H1 (cell line): ENCODE measurements at regions of chr12 and their contacts with region 1.

Region 1: DNA sequence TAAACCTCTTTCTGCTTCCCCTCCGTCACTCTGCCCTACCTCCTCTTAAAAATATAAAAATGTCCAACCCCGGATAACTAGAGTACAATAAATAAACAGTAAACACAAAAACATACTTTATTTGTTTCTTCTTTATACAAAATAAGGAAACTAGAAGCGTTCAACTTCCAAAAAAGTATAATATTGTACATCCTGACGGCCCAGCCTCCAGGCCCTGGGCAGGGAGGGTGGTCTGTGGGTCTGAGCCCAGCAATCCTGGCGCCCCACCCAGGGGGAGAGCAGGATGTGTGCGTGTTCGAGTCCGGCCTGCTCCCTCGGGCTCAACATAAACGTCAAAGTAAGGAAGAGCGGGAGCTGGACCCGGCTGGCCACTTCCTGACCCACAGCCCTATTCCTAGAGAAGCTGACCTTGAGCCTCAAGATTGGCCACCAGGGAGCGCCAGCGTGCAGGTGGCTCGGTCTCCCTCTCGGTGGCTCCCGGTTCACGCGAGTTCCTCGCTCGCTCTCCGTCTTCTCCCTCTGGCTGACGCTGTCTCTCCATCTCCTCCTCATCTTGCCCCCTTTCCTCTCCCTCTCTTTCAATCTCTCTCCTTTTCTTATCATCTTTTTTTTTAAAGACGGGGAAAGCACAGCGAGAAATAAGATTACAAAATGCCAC is 9.4 kb downstream of the LHX5 start:
- DNase-seq: peak in 1 of 2 experiments; percentile 90
- H3K4me3 ChIP-seq: peak overlapping the region in 1 of 4 experiments; percentile 47; a peak in 3 of 8 replicates
- H3K27ac ChIP-seq: no peak overlapping the region
- H3K4me1 ChIP-seq: peaks cover 4 to 32% (median 22%) of the 10 kb centered on the region in 4 experiments
- H3K27me3 ChIP-seq: peaks cover 49 to 58% (median 52%) of the 10 kb centered on the region in 4 experiments
- CTCF ChIP-seq: peak in 2 of 3 experiments; percentile 84 to 94; a peak in 3 of 4 replicates
- EP300 ChIP-seq: no peak
- POLR2A ChIP-seq: no peak
- RAD21 ChIP-seq: peak; percentile 71 to 77

Region 2: DNA sequence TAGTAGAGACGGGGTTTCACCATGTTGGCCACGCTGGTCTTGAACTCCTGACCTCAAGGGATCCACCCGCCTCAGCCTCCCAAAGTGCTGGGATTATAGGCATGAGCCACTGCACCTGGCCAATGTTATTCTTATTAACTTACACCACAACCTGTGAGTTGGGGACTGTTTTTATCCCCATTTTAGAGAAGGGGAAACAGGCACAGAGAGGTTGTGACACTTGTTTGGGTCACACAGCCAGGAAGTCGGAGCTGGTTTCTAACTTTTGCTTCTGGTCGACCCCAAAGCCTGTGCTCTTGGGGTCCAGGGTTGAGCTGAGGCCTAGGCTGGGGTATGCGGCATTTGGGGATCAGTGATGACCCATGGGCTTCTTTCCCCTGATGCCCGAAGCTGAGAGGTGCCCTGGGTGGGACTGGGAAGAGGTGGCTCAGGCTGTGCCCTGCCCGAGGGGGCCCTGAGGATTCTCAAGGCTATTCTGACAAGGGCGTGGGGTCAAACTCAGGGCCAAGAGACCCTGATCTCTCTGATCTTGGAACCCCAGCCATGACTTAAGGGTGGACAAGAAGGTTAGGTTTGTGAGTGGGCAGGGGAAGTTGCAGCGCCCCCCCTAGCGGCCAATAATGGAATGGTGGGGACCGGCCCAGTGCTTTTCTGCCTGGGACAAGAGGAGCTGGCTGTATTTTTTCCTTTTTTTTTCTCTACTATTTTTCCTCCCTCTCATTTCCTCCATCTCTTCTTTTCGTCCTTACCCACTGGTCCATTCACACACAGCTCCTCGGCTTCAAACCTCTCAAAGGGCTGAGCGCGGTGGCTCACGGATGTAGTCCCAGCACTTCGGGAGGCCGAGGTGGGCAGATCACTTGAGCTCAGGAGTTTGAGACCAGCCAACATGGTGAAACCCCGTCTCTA is 37.1 kb before region 1 on chr12:
- CTCF ChIA-PET with region 1: interaction called, 13 read pairs
- POLR2A ChIA-PET with region 1: no interaction called
- DNase-seq: peak; percentile 38 to 94
- H3K4me3 ChIP-seq: peak overlapping the region in 1 of 4 experiments; percentile 52; a peak in 2 of 8 replicates
- H3K27ac ChIP-seq: peak overlapping the region; percentile 50; the same call in 1 of the 2 replicates
- H3K4me1 ChIP-seq: peaks cover 0 to 7% (median 5%) of the 10 kb centered on the region in 4 experiments; a peak in 5 of 7 replicates
- H3K27me3 ChIP-seq: no peaks in the 10 kb centered on the region
- CTCF ChIP-seq: peak; percentile 74 to 85 (median 81)
- EP300 ChIP-seq: no peak
- POLR2A ChIP-seq: no peak
- RAD21 ChIP-seq: peak; percentile 73 to 76

Region 3: DNA sequence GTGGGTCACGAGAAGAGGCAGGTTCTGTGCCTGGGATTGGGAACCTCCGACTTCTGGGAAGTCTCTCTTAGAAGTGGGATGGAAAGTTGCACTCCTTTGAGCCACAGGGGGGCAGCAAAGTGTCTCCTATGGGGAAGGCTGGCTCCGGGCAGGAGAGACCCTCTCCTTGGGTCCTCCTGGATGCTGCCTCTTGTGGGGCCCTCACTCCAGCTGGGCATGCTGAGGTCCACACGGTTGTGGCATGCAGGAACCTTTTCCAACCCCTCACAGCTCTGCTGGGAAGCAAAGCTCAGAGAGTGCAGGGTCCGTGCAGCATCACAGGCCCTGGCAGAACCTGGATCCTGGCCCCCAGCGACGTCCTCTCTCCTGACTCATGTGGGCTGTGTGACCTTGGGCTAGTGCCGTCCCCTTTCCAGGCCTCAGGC is 22.6 kb before region 1 on chr12:
- CTCF ChIA-PET with region 1: interaction called, 82 read pairs
- POLR2A ChIA-PET with region 1: interaction called, 3 read pairs
- DNase-seq: peak in 1 of 2 experiments; percentile 89
- H3K4me3 ChIP-seq: no peak overlapping the region
- H3K27ac ChIP-seq: no peak overlapping the region
- H3K4me1 ChIP-seq: peaks cover 0 to 2% (median under 1%) of the 10 kb centered on the region in 4 experiments; a peak in 2 of 7 replicates
- H3K27me3 ChIP-seq: peaks cover 0 to 2% (median 0%) of the 10 kb centered on the region in 4 experiments; a peak in 1 of 7 replicates
- CTCF ChIP-seq: peak; percentile 70 to 91 (median 88)
- EP300 ChIP-seq: no peak
- POLR2A ChIP-seq: no peak
- RAD21 ChIP-seq: peak; percentile 95

Region 4: GRCh38 chr12:113479590-113480335 is 17.5 kb after region 1 on chr12:
- CTCF ChIA-PET with region 1: interaction called, 79 read pairs
- POLR2A ChIA-PET with region 1: interaction called, 14 read pairs
- DNase-seq: peak in 1 of 2 experiments; percentile 96
- H3K4me3 ChIP-seq: peak overlapping the region; percentile 33 to 57 (median 50); a peak in 7 of 8 replicates
- H3K27ac ChIP-seq: no peak overlapping the region
- H3K4me1 ChIP-seq: peaks cover 14 to 44% (median 21%) of the 10 kb centered on the region in 4 experiments
- H3K27me3 ChIP-seq: peaks cover 46 to 69% (median 64%) of the 10 kb centered on the region in 4 experiments
- CTCF ChIP-seq: no peak
- EP300 ChIP-seq: peak in 1 of 2 experiments; percentile 79; a peak in 1 of 3 replicates
- POLR2A ChIP-seq: no peak
- RAD21 ChIP-seq: peak; percentile 1 to 36; a peak in 2 of 4 replicates

Region 5: GRCh38 chr12:113485330-113485729 is 23.1 kb after region 1 on chr12:
- CTCF ChIA-PET with region 1: interaction called, 30 read pairs
- POLR2A ChIA-PET with region 1: interaction called, 3 read pairs
- DNase-seq: peak in 1 of 2 experiments; percentile 83
- H3K4me3 ChIP-seq: no peak overlapping the region
- H3K27ac ChIP-seq: no peak overlapping the region
- H3K4me1 ChIP-seq: peaks cover 4 to 24% (median 15%) of the 10 kb centered on the region in 4 experiments; a peak in 5 of 7 replicates
- H3K27me3 ChIP-seq: peaks cover 9 to 22% (median 12%) of the 10 kb centered on the region in 4 experiments; a peak in 5 of 7 replicates
- CTCF ChIP-seq: no peak
- EP300 ChIP-seq: no peak
- POLR2A ChIP-seq: no peak
- RAD21 ChIP-seq: no peak

Region 6: DNA sequence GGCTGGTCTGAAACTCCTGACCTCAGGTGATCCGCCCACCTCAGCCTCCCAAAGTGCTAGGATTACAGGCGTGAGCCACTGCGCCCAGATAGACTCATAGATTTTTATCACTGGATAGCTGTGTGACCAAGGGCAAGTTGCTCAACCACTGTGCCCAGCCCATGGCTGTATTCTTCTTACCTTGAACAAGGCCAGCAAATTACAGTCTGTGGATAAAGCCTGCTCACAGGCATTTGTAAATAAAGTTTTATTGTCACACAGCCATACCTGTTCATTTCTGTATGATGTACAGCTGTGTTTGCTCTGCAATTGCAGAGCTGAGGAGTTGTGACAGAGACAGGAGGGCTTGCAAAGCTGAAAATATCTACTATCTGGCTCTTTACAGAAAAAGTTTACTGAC is 44.6 kb after region 1 on chr12:
- CTCF ChIA-PET with region 1: no interaction called
- POLR2A ChIA-PET with region 1: no interaction called
- DNase-seq: no peak
- H3K4me3 ChIP-seq: no peak overlapping the region
- H3K27ac ChIP-seq: no peak overlapping the region
- H3K4me1 ChIP-seq: peaks cover 1 to 5% (median 4%) of the 10 kb centered on the region in 4 experiments; a peak in 5 of 7 replicates
- H3K27me3 ChIP-seq: peaks cover 0 to 2% (median under 1%) of the 10 kb centered on the region in 4 experiments; a peak in 3 of 7 replicates
- CTCF ChIP-seq: no peak
- EP300 ChIP-seq: no peak
- POLR2A ChIP-seq: no peak
- RAD21 ChIP-seq: no peak

Region 7: GRCh38 chr12:113528606-113529293 is 66.5 kb after region 1 on chr12:
- CTCF ChIA-PET with region 1: no interaction called
- POLR2A ChIA-PET with region 1: no interaction called
- DNase-seq: no peak
- H3K4me3 ChIP-seq: no peak overlapping the region
- H3K27ac ChIP-seq: no peak overlapping the region
- H3K4me1 ChIP-seq: peaks cover 4 to 8% (median 6%) of the 10 kb centered on the region in 4 experiments; a peak in 6 of 7 replicates
- H3K27me3 ChIP-seq: no peaks in the 10 kb centered on the region; a peak in 1 of 7 replicates
- CTCF ChIP-seq: no peak
- EP300 ChIP-seq: no peak
- POLR2A ChIP-seq: no peak
- RAD21 ChIP-seq: no peak

Region 8: GRCh38 chr12:113582521-113583218 is 120.4 kb after region 1 on chr12:
- CTCF ChIA-PET with region 1: interaction called, 10 read pairs
- POLR2A ChIA-PET with region 1: no interaction called
- DNase-seq: no peak
- H3K4me3 ChIP-seq: no peak overlapping the region
- H3K27ac ChIP-seq: no peak overlapping the region
- H3K4me1 ChIP-seq: peaks cover 4 to 16% (median 8%) of the 10 kb centered on the region in 4 experiments; a peak in 6 of 7 replicates
- H3K27me3 ChIP-seq: no peaks in the 10 kb centered on the region
- CTCF ChIP-seq: no peak
- EP300 ChIP-seq: no peak
- POLR2A ChIP-seq: no peak
- RAD21 ChIP-seq: no peak

Region 9: DNA sequence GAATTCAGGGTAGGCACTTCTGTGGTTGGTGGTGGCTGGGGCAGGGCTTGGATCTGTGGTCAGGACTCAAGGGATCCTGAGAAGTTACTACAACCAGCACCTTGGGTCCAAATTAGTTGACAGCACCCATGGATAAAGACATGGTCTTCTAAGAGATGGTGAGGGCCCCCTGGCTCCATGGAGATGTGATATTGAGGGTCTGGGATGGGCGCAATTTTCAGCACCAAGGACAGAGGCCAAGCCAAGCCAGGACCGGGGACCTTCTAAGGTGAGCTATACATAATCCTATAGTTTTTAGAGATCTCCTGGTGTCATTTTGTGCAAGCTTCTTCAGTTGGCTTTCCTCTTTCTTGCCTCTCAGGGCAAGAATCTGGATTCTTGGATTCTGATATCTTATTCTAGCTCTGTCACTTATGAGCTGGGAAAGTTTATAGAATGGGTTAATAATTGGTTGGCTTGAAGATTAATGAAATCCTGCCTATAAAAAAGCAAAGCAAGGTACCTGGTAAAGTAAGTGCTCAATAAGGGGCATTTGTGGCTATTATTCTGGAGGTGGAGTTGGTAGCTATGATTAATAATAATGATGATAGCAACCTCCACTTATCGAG is 139.5 kb after region 1 on chr12:
- CTCF ChIA-PET with region 1: interaction called, 10 read pairs
- POLR2A ChIA-PET with region 1: no interaction called
- DNase-seq: peak in 1 of 2 experiments; percentile 79
- H3K4me3 ChIP-seq: no peak overlapping the region
- H3K27ac ChIP-seq: no peak overlapping the region
- H3K4me1 ChIP-seq: peaks cover 0 to 3% (median 0%) of the 10 kb centered on the region in 4 experiments; a peak in 1 of 7 replicates
- H3K27me3 ChIP-seq: no peaks in the 10 kb centered on the region; a peak in 1 of 7 replicates
- CTCF ChIP-seq: no peak
- EP300 ChIP-seq: no peak
- POLR2A ChIP-seq: no peak
- RAD21 ChIP-seq: no peak